GM10248 (cell line): ENCODE measurements at regions of chr9 and their contacts with region 1.

Region 1: DNA sequence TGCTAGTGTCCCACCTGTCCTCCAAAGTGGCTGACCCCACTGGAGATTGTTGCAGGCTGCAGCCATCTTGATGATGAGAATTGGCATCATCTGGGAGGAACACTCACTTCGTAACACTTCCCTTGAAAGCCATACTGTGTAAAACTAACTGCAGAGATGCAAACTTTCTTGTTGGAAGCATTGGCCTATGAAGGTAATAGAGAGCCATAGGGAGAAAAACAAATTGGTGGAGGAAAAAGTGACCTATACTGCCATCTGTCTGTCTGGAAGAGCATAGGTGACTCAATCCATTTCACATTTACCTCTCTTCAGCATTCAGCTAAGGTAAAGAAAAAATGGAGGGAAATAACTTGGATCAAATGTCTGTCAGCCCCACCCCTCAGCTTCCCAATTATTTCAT is 473.4 kb downstream of the NTRK2 start:
- DNase-seq: peak; percentile 34
- CTCF ChIP-seq: peak; percentile 39

Region 2: GRCh38 chr9:84397151-84397728 is 745.7 kb before region 1 on chr9:
- CTCF ChIA-PET with region 1: interaction called, 38 read pairs
- POLR2A ChIA-PET with region 1: no interaction called
- DNase-seq: peak; percentile 76
- CTCF ChIP-seq: peak; percentile 91

Region 3: GRCh38 chr9:84697509-84698114 is 445.4 kb before region 1 on chr9:
- CTCF ChIA-PET with region 1: interaction called, 48 read pairs
- POLR2A ChIA-PET with region 1: no interaction called
- DNase-seq: peak; percentile 69
- CTCF ChIP-seq: peak; percentile 93

Region 4: GRCh38 chr9:84997472-84997871 is 145.5 kb before region 1 on chr9:
- CTCF ChIA-PET with region 1: interaction called, 37 read pairs
- POLR2A ChIA-PET with region 1: no interaction called
- DNase-seq: no peak
- CTCF ChIP-seq: peak; percentile 35

Region 5: GRCh38 chr9:85009251-85009650 is 133.7 kb before region 1 on chr9:
- CTCF ChIA-PET with region 1: interaction called, 26 read pairs
- POLR2A ChIA-PET with region 1: no interaction called
- DNase-seq: no peak
- CTCF ChIP-seq: no peak

Region 6: DNA sequence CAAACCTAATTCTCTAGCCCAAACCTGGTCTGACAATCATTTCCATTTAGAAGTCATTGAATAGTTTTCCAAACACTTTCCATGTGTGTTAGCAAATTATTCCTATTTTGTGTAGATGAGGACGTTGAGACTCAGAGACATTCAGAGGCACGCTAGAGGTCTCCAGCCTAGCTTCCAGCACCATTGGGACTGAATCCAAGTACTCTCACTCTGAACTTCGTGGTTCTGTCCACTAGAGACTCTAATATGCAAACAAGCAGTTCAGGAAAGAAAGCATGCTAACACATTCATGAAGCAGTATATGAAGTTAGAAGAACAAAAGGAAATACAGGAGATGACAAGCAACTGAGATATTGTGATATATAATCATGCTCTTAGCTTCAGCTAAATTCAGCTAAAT is 118.6 kb before region 1 on chr9:
- CTCF ChIA-PET with region 1: no interaction called
- POLR2A ChIA-PET with region 1: no interaction called
- DNase-seq: no peak
- CTCF ChIP-seq: no peak

Region 7: DNA sequence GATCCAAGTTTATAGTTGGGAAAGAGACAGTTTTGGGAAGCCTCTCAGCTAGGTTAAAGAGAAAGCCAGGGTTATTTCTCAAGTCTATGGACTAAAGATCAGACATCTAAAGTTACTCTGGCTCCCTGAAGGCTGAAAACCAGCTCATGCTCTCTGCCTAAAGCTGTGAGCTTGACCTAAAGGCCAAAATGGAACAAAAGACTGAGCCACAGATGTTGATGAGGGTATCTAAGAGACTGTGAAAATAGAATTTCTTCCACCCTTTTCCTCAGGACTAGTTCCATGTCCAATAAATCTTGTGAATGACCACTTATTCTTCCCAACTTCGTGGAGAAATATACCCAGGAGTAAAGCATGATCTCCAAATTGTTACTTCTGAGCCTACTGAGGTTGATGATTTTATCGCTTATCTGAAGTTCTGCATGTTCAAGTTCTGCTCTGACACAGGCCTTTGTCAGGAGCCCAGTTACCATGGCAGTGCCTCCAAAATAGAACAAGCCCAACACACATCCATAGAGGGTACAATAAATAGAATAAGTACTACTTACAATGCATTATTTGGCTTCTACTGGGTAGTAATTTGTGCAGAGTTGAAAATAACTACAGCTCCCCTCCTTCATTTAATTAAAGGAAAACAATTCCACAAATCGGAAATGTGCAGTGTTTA is 99.9 kb before region 1 on chr9:
- CTCF ChIA-PET with region 1: no interaction called
- POLR2A ChIA-PET with region 1: no interaction called
- DNase-seq: no peak
- CTCF ChIP-seq: no peak

Region 8: DNA sequence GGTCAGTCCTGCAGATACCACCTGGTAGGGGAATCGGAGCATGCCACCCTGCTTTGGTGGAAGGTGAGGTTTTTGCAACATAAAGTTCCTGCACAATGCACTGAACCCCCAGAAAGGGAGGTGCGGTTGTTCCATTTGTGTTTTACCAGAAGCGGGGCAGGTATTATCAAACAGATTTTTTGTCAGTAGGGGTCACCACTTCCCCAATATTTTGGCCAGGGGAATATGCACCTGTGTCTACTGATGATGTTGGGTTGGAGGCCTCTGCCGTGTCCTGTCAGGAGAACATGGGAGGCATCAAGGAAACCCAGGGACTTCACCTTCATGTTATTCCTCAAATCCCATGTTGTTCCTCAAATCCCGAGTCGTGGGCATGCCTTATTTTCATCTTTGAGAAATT is 34.7 kb before region 1 on chr9:
- CTCF ChIA-PET with region 1: interaction called, 19 read pairs
- POLR2A ChIA-PET with region 1: no interaction called
- DNase-seq: no peak
- CTCF ChIP-seq: no peak

Region 9: DNA sequence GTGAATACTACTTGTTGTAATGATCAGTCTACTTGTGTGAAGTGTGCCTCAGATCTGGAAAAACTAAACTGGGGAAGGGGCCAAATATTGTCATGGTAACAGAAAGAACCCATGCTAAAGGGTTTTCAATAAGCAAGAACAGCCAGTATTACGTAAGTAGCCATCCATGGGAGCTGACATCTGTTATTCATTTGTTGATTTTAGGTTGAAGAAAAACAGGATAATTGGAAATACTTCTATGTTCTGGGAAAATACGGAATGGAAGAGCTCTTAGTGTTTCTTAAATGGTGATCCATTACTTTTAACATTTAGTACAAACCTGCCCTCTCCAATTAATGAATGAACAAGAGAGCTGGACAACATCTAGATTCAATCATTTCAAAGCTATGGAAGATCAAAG is 12.4 kb after region 1 on chr9:
- CTCF ChIA-PET with region 1: interaction called, 43 read pairs
- POLR2A ChIA-PET with region 1: no interaction called
- DNase-seq: no peak
- CTCF ChIP-seq: no peak